ENCODE measurements at regions of chr11 and their contacts with region 1.

Region 1: DNA sequence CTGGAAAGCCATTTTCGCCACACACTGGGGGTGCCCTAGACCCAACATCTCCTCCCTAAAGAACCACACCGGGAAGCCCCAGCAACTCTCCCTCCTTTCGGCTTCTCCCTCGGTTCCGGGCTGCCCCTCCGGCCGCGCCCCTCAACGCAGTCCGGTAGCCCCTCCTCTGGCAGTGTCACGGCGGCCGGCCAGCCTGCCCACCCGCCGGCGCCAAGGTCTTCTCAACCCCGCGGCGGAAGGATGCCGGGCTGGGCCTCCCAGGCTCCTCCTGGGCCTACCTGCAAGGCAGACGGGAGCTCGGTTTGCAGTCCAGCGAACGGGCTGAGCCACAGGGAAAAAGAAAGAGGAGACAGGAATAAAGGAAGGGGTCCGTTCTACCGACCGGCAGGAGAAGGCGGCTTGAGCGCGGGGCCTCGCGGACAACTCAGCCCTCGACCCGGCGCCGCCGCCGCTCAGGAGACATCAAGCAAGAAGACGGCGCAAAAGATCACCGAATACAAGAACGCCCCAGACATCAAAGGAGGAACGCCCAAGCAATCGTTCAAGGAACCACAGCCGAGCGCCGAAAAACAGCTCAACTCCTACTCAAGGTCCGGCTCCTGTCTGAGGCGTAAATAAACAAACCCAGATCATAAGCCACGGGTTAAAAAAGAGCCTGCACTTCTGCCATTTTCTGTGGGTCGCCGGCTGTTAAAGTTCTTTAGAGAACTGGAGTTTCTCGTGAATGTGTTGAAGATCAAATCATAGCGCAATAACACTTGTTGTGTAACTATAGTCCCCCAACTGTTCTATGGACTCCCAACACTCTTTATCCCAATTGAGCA is at the start of gene AMBRA1:
- H3K4me3 ChIP-seq: peak within 1 kb of the TSS; percentile 88
- H3K27ac ChIP-seq: peak within 1 kb of the TSS; percentile 75
- H3K4me1 ChIP-seq: peaks cover 4% of the 10 kb centered on the region; the same call in 1 of the 2 replicates
- CTCF ChIP-seq: no peak

Region 2: DNA sequence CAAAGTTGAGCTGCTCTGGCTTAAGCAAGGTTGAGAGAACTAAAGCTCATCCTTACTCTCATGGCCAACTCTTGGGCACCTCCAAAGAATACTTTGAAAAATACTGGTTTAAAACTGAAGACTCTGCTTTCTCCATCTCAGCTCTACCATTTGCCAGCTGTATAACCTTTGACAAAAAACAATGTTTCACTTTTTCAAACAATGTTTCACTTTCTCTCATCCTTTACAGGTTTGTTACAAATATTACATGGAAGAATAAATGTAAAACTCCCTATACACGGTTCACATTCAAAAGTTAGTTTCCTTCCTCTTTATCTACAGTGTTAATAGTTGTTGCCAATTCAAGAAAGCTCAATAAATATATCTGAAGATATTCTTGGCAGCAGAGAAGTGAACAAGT is 19.1 kb before region 1 on chr11:
- CTCF ChIA-PET with region 1: no interaction called
- POLR2A ChIA-PET with region 1: interaction called, 13 read pairs
- H3K4me3 ChIP-seq: no peak overlapping the region
- H3K27ac ChIP-seq: no peak overlapping the region
- H3K4me1 ChIP-seq: no peaks in the 10 kb centered on the region
- CTCF ChIP-seq: no peak

Region 3: DNA sequence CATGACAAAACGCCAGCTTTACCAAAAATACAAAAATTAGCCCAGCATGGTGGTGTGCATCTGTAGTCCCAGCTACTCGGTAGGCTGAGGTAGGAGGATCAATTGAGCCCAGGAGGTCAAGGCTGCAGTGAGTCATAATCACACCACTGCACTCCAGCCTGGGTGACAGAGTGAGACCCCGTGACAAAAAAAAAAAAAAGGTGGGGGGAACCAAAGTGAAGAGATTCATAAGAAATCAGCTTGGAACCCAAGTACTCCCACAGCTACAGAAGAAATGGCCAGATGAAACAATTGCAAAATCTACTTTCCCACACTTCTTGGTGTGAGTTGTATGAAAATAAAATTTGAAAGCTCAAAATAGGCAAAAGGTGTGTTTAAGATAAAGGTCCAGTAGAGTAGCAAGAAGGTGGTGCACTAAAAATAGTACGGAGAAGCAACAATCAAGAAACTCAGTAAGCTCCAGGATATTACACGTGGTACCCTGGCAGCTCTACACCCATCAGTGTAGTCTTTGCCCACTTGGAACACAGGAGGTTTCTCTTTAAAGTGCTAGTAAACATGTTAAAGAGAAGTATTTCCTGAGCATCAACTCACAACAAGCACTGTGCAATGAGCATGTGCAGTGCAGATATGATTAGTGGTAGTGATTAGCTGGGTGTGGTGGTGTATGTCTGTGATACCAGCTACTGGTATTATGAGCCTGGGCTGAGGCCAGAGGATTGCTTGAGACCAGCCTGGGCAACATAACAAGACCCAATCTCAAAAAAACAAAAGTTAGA is 18.0 kb after region 1 on chr11:
- CTCF ChIA-PET with region 1: interaction called, 4 read pairs
- POLR2A ChIA-PET with region 1: interaction called, 13 read pairs
- H3K4me3 ChIP-seq: no peak overlapping the region
- H3K27ac ChIP-seq: no peak overlapping the region
- H3K4me1 ChIP-seq: no peaks in the 10 kb centered on the region
- CTCF ChIP-seq: no peak

Region 4: GRCh38 chr11:46616998-46617675 is 23.4 kb after region 1 on chr11 and contains the starts of genes ATG13 and HARBI1:
- CTCF ChIA-PET with region 1: interaction called, 4 read pairs
- POLR2A ChIA-PET with region 1: interaction called, 13 read pairs
- H3K4me3 ChIP-seq: peak within 1 kb of the TSS; percentile 79
- H3K27ac ChIP-seq: peak within 1 kb of the TSS; percentile 83
- H3K4me1 ChIP-seq: no peaks in the 10 kb centered on the region
- CTCF ChIP-seq: no peak

Measured in HEK293 (cell line).